A673 (cell line): ENCODE measurements at regions of chr7 and their contacts with region 1.

Region 1: DNA sequence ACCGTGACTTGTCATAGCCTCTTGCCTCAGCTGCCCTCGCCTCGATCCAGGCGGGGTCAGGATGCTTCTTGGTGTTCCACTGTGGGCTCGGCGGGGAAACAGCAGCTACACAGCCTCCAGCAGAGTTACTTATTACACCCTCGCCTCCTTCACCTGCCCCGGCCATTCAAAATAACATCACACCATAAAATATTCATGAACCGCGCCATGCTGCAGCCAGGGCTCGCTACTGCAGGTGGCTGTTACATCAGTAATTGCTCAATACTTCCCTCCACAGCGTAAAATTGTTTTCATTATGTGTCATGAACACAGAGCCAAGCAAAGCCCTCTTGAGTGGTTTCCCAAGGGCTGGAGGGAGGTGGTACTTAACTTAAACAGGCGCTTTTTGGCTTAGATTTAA is 241.5 kb upstream of the SP8 start:
- DNase-seq: peak; percentile 5
- H3K4me3 ChIP-seq: no peak overlapping the region
- H3K27ac ChIP-seq: no peak overlapping the region
- H3K4me1 ChIP-seq: no peaks in the 10 kb centered on the region
- H3K27me3 ChIP-seq: peaks cover 60% of the 10 kb centered on the region
- CTCF ChIP-seq: no peak

Region 2: GRCh38 chr7:19519443-19520021 is 1508.7 kb before region 1 on chr7:
- CTCF ChIA-PET with region 1: no interaction called
- POLR2A ChIA-PET with region 1: no interaction called
- intact Hi-C with region 1: no loop called
- DNase-seq: peak; percentile 32
- H3K4me3 ChIP-seq: no peak overlapping the region
- H3K27ac ChIP-seq: no peak overlapping the region
- H3K4me1 ChIP-seq: no peaks in the 10 kb centered on the region
- H3K27me3 ChIP-seq: no peaks in the 10 kb centered on the region
- CTCF ChIP-seq: no peak

Region 3: GRCh38 chr7:20998309-20998708 is 29.9 kb before region 1 on chr7:
- CTCF ChIA-PET with region 1: no interaction called
- POLR2A ChIA-PET with region 1: no interaction called
- intact Hi-C with region 1: loop called (anchors 1 kb)
- DNase-seq: no peak
- H3K4me3 ChIP-seq: no peak overlapping the region
- H3K27ac ChIP-seq: no peak overlapping the region
- H3K4me1 ChIP-seq: no peaks in the 10 kb centered on the region
- H3K27me3 ChIP-seq: peaks cover 3% of the 10 kb centered on the region
- CTCF ChIP-seq: no peak